ENCODE measurements at regions of chr14 and their contacts with region 1.

Region 1: GRCh38 chr14:24271134-24271833 is at the start of gene RABGGTA:
- DNase-seq: peak; percentile 71 to 79 (median 75)
- H3K4me3 ChIP-seq: peak within 1 kb of the TSS; percentile 71 to 97 (median 85)
- H3K4me3 Mint-ChIP-seq: peak within 1 kb of the TSS; percentile 89 to 94
- H3K27ac ChIP-seq: peak within 1 kb of the TSS; percentile 72 to 98
- H3K27ac Mint-ChIP-seq: peak within 1 kb of the TSS; percentile 90 to 97 (median 96)
- H3K4me1 ChIP-seq: peaks cover 54 to 58% of the 10 kb centered on the region in 2 donors
- H3K4me1 Mint-ChIP-seq: peaks cover 55% of the 10 kb centered on the region
- H3K27me3 ChIP-seq: no peaks in the 10 kb centered on the region
- H3K27me3 Mint-ChIP-seq: peaks cover 0 to 2% (median 0%) of the 10 kb centered on the region in 3 donors
- CTCF ChIP-seq: peak; percentile 83
- polyA plus RNA-seq, gene RABGGTA: 34.5 to 125 (median 35.4) TPM

Region 2: GRCh38 chr14:24241829-24242443 is 29.3 kb before region 1 on chr14:
- intact Hi-C with region 1: loop called in 1 of 2 experiments (anchors 2 kb)
- DNase-seq: peak; percentile 88 to 93 (median 92)
- H3K4me3 ChIP-seq: peak overlapping the region; percentile 48 to 82 (median 78)
- H3K4me3 Mint-ChIP-seq: peak overlapping the region; percentile 90 to 97
- H3K27ac ChIP-seq: peak overlapping the region; percentile 94 to 98
- H3K27ac Mint-ChIP-seq: peak overlapping the region; percentile 99 to 100 (median 100)
- H3K4me1 ChIP-seq: peaks cover 50 to 72% of the 10 kb centered on the region in 2 donors
- H3K4me1 Mint-ChIP-seq: peaks cover 66% of the 10 kb centered on the region
- H3K27me3 ChIP-seq: no peaks in the 10 kb centered on the region
- H3K27me3 Mint-ChIP-seq: no peaks in the 10 kb centered on the region
- CTCF ChIP-seq: peak; percentile 33

Region 3: DNA sequence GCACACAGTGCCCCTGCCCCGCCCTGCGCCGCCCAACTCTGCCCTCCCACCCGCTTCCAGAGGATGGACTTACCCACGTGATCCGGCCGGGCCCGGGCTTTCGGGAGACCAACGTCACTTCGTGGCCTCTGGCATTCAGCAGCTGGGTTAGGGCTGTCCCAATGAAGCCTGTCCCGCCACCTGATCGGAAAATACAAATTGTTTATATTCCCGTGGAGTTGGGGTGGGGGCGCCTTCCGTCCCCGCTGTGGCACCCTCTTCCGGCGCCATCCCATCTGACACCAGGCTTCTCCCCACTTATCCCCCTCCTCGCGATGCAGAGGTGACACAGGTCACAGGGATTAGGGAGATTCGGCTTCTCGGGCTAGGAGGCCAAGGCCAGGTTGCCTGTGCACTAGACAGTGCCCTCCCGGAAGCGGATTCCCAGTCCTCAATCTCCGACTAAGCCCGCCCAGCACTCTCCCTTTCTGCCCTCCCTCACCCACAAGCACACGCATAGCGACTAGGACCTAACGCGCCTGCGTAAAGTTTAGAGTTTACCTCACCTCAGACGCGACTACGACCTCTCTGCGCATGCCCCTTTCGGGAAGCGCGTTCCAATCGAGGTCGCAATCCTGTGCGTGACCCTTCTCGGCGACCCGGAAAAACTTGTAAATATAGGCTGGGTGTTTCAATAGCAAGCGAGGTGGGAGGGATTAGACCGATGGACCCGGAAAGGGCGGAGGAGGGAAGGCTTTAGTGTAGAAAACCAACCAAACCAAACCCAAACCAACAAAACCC is 171.2 kb after region 1 on chr14 and contains the start of gene SDR39U1:
- intact Hi-C with region 1: no loop called
- DNase-seq: peak; percentile 98 to 99 (median 99)
- H3K4me3 ChIP-seq: peak within 1 kb of the TSS; percentile 78 to 83 (median 82)
- H3K4me3 Mint-ChIP-seq: peak within 1 kb of the TSS; percentile 87 to 95
- H3K27ac ChIP-seq: peak within 1 kb of the TSS; percentile 95 to 99
- H3K27ac Mint-ChIP-seq: peak within 1 kb of the TSS; percentile 98 to 99 (median 98)
- H3K4me1 ChIP-seq: peaks cover 36 to 57% of the 10 kb centered on the region in 2 donors
- H3K4me1 Mint-ChIP-seq: peaks cover 49% of the 10 kb centered on the region
- H3K27me3 ChIP-seq: no peaks in the 10 kb centered on the region
- H3K27me3 Mint-ChIP-seq: peaks cover 0 to 3% (median 0%) of the 10 kb centered on the region in 3 donors
- CTCF ChIP-seq: no peak
- polyA plus RNA-seq, gene SDR39U1: 37.3 to 110 (median 39.2) TPM

Region 4: GRCh38 chr14:24456980-24457379 is 185.7 kb after region 1 on chr14:
- intact Hi-C with region 1: no loop called
- DNase-seq: no peak
- H3K4me3 ChIP-seq: no peak overlapping the region
- H3K4me3 Mint-ChIP-seq: no peak overlapping the region
- H3K27ac ChIP-seq: no peak overlapping the region
- H3K27ac Mint-ChIP-seq: no peak overlapping the region
- H3K4me1 ChIP-seq: no peaks in the 10 kb centered on the region
- H3K4me1 Mint-ChIP-seq: no peaks in the 10 kb centered on the region
- H3K27me3 ChIP-seq: no peaks in the 10 kb centered on the region
- H3K27me3 Mint-ChIP-seq: peaks cover 0 to 7% (median 2%) of the 10 kb centered on the region in 3 donors
- CTCF ChIP-seq: no peak